Caco-2 (cell line): ENCODE measurements at regions of chr12 and their contacts with region 1.

Region 1: DNA sequence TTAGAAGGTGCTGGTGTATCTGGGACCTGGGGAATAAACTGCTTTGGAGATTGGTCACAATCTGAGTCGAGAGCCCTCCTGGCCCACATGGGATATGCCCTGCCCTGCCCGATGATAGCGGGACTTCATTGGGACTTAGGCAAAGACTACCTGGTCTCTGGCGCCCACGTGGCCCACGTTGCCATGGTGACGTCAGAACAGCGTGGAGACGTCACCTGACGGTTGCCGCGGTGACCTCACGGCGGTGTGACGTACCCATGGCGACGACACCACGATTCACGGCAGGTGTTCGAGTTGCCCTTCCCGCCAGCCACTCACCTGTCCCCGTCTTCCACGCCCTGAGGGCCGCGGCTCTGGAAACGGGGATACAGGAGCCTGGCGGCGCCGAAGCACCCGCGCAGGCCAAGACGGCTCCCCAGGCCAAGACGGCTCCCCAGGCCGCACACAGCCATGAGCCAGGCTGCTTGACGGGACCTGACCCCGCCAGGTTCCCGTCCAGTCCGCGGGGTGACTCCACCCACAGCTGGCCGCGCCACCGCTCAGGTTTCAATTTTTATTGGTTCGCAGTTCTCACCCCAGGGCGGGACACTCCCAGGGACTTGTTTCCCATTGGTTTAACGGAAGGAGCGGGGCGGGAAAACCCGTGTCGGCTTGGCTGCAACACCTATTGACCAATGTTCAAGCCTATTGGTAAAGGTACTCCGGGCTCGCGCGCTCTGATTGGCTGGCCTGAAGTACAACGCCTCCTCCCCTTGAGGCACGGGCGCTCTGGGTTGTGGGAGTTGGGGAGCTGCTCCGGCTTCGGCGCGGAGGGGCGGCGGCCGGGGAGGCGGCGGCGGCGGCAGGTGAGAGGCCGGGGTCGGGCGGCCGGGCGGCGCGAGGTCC is at the starts of genes MMAB and MVK:
- DNase-seq: peak; percentile 99 to 100
- H3K4me3 ChIP-seq: peak within 1 kb of the TSS; percentile 65
- H3K4me3 Mint-ChIP-seq: peak within 1 kb of the TSS; percentile 81
- H3K27ac Mint-ChIP-seq: peak within 1 kb of the TSS; percentile 96
- H3K4me1 ChIP-seq: no peaks in the 10 kb centered on the region; the same call in 1 of the 2 replicates
- H3K4me1 Mint-ChIP-seq: no peaks in the 10 kb centered on the region
- H3K27me3 ChIP-seq: no peaks in the 10 kb centered on the region
- H3K27me3 Mint-ChIP-seq: no peaks in the 10 kb centered on the region
- CTCF ChIP-seq: no peak
- total RNA-seq, gene MMAB: 42.3 and 48.9 TPM in 2 replicates
- total RNA-seq, gene MVK: 28.4 and 28.9 TPM in 2 replicates

Region 2: GRCh38 chr12:109518820-109519665 is 54.2 kb before region 1 on chr12:
- CTCF ChIA-PET with region 1: no interaction called
- POLR2A ChIA-PET with region 1: no interaction called
- intact Hi-C with region 1: loop called (anchors 2 kb)
- DNase-seq: peak in 1 of 2 experiments; percentile 72
- H3K4me3 ChIP-seq: no peak overlapping the region
- H3K4me3 Mint-ChIP-seq: no peak overlapping the region
- H3K27ac Mint-ChIP-seq: no peak overlapping the region
- H3K4me1 ChIP-seq: no peaks in the 10 kb centered on the region
- H3K4me1 Mint-ChIP-seq: no peaks in the 10 kb centered on the region
- H3K27me3 ChIP-seq: no peaks in the 10 kb centered on the region
- H3K27me3 Mint-ChIP-seq: no peaks in the 10 kb centered on the region
- CTCF ChIP-seq: peak; percentile 87 to 88

Region 3: DNA sequence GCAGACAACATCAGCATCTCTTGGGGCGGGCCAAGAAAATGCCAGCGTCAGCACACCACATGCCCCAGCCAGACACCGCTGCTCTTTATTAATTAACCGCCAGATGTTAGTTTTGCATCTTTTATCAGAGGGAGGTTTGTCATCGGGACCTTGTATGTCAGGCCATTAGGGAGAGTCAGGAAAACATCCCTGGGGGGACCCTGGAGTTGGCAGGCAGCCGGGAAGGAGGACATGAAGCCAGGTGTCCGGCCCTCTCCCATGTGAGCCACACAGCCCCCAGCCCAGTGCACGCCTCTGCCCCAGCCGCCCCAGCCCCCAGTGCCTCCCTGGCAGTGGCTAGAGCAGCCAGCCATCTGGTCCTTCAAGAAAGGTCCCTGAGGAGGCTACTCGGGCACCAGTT is 83.5 kb after region 1 on chr12:
- CTCF ChIA-PET with region 1: no interaction called
- POLR2A ChIA-PET with region 1: no interaction called
- intact Hi-C with region 1: no loop called
- DNase-seq: no peak
- H3K4me3 ChIP-seq: no peak overlapping the region
- H3K4me3 Mint-ChIP-seq: no peak overlapping the region
- H3K27ac Mint-ChIP-seq: no peak overlapping the region
- H3K4me1 ChIP-seq: peaks cover 13% of the 10 kb centered on the region
- H3K4me1 Mint-ChIP-seq: peaks cover 10% of the 10 kb centered on the region
- H3K27me3 ChIP-seq: no peaks in the 10 kb centered on the region
- H3K27me3 Mint-ChIP-seq: no peaks in the 10 kb centered on the region
- CTCF ChIP-seq: no peak

Region 4: DNA sequence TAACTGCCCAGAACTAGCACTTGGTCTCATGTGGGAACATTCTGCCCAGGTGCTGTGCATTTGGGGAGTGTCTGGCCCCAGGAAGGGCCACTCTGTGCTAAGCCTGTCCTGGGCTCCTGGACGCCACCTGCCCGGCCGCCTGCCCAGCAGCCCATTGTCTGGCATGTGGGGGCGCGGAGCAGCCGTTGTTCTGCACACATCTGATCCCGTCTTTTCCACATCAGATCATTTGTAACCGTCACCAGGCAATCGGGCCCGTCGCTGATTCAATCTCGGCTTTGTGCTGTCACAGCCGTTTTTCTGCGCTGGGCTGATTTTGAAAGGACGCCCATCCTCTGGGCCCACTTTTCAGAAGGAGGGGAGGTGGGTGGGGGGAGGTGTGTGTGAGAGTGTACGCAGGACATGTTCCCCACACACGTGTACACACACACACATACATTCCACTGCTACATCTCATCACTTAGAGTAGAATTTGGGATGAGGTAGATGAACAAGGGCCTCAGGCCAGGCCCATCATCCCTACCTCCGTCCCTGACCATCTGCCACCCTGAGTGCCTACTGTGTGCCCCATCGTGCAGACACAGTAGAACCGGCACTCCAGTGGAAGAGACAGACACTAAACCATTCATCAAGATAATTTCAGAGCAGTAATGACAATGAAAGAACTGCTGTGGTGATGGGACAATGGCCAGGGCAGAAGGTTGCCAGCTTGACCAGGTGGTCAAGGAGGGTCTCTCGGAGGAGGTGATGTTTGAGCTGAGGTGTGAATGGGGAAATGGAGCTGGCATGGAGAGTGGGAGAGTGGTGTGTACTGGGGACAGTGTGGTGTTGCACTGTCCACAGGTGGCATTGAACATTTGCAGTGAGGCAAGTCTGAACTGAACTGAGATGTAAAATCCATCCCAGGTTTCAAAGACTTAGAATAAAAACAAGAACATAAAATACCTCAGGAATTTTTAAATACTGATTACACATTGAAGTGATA is 159.3 kb after region 1 on chr12:
- CTCF ChIA-PET with region 1: no interaction called
- POLR2A ChIA-PET with region 1: no interaction called
- intact Hi-C with region 1: no loop called
- DNase-seq: peak in 1 of 2 experiments; percentile 15
- H3K4me3 ChIP-seq: no peak overlapping the region
- H3K4me3 Mint-ChIP-seq: no peak overlapping the region
- H3K27ac Mint-ChIP-seq: peak overlapping the region; percentile 1
- H3K4me1 ChIP-seq: peaks cover 25% of the 10 kb centered on the region
- H3K4me1 Mint-ChIP-seq: peaks cover 18% of the 10 kb centered on the region
- H3K27me3 ChIP-seq: no peaks in the 10 kb centered on the region
- H3K27me3 Mint-ChIP-seq: no peaks in the 10 kb centered on the region
- CTCF ChIP-seq: no peak

Region 5: DNA sequence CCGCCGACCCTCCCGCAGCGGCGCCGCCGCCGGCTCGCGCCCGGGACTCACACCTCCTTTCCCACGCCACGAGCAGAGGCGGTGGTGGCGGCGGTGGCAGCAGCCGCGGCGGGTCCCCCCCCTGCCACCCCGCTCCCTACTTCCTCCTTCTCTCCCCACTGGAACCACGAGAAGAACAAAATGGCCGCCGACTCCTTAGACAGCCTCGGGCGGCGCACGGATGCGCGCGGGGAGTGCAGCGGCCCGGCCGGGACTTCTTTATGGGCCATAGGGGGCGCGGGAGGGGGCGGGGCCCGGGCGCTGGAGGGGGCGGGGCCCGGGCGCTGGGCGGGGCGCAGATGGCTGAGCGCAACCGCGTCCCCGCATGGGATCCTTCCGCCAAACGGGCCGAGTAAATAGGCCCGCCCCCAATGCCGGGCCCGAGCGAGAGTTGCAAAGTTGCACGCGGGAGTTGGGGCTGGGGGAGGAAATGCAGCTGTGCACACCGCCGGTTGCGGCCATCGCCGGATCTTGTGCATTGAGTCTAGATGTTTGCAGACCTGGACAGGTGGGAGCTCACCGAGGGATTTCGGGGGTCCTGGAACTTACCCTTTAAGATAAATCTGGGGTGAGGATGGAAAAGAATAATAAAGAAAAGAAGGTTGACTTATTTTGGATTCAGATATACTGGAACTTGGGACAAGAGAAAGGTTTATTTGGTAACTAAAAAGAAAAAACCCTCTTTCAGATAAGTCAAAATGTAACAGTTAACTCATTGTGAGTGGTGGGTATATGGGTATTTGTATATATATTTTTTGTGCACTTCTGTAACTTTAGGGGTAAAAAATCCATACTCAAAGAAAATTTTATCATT is 1169.7 kb after region 1 on chr12 and contains the start of gene PPP1CC:
- CTCF ChIA-PET with region 1: no interaction called
- POLR2A ChIA-PET with region 1: no interaction called
- intact Hi-C with region 1: loop called (anchors 5 kb)
- DNase-seq: peak; percentile 92 to 93
- H3K4me3 ChIP-seq: peak within 1 kb of the TSS; percentile 97
- H3K4me3 Mint-ChIP-seq: peak within 1 kb of the TSS; percentile 93
- H3K27ac Mint-ChIP-seq: peak within 1 kb of the TSS; percentile 95
- H3K4me1 ChIP-seq: peaks cover 19% of the 10 kb centered on the region; the same call in 1 of the 2 replicates
- H3K4me1 Mint-ChIP-seq: peaks cover 13% of the 10 kb centered on the region
- H3K27me3 ChIP-seq: no peaks in the 10 kb centered on the region
- H3K27me3 Mint-ChIP-seq: no peaks in the 10 kb centered on the region
- CTCF ChIP-seq: no peak
- total RNA-seq, gene PPP1CC: 202 and 213 TPM in 2 replicates